H1 (cell line): ENCODE measurements at regions of chr17 and their contacts with region 1.

Region 1: DNA sequence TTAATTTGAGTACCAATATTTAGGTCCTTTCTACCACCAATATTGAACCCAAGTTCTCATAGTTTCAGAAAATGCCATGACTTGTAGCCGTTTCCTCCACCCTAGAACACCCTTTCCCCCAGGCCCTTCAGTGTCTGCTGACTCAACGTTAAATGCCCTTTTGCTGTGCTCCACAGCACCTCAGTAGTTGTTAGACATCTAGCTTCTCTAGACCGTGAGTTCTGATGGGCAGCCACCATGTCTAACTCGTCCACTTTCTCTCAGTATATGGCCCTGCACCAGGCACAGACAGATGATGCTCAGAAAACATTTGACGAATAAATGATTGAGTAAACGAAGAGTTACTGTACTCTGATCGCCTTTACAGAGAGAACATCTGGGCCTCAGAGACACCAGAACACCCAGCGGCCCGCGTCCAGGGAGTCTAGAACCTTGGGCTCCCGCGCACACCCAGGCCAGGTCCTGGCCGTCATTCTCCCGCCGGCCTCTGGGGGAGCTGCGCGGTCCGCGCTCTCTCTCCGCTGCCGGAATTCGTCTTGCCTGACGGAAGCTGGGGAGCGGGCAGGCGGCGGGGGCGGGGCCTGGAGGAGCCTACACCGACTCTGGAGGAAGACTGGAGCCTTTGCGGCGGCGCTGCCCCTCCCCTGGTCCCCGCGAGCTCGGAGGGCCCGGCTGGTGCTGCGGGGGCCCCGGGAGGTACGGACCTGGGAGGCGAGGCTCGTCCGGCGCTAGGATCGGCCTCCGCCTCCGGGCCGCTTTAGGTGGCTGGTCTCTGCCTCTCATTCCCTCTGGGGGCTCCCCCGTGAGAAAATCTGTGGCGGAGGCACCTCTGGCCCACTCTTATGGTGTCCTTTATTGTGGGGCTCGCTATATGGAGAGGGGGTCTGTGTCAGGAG is at the start of gene NKIRAS2:
- DNase-seq: peak; percentile 72 to 94
- H3K4me3 ChIP-seq: peak within 1 kb of the TSS; percentile 84 to 99 (median 89)
- H3K27ac ChIP-seq: no peak within 1 kb of the TSS
- H3K4me1 ChIP-seq: peaks cover 0 to 5% (median 1%) of the 10 kb centered on the region in 4 experiments; a peak in 3 of 7 replicates
- H3K27me3 ChIP-seq: no peaks in the 10 kb centered on the region
- CTCF ChIP-seq: peak; percentile 77 to 85 (median 81)
- EP300 ChIP-seq: no peak
- POLR2A ChIP-seq: peak in 1 of 2 experiments; percentile 77; a peak in 1 of 3 replicates
- RAD21 ChIP-seq: peak in 1 of 2 experiments; percentile 33; a peak in 2 of 4 replicates
- total RNA-seq, gene NKIRAS2: 31.1 and 34.5 TPM in 2 replicates

Region 2: GRCh38 chr17:41930009-41930832 is 89.5 kb before region 1 on chr17 and contains the start of gene ODAD4:
- CTCF ChIA-PET with region 1: interaction called, 3 read pairs
- POLR2A ChIA-PET with region 1: interaction called, 15 read pairs
- DNase-seq: peak; percentile 77 to 92
- H3K4me3 ChIP-seq: peak within 1 kb of the TSS; percentile 71 to 81 (median 75)
- H3K27ac ChIP-seq: peak within 1 kb of the TSS; percentile 28
- H3K4me1 ChIP-seq: peaks cover 0 to 4% (median 2%) of the 10 kb centered on the region in 4 experiments; a peak in 2 of 7 replicates
- H3K27me3 ChIP-seq: no peaks in the 10 kb centered on the region
- CTCF ChIP-seq: peak in 2 of 3 experiments; percentile 30 to 47; a peak in 3 of 4 replicates
- EP300 ChIP-seq: no peak
- POLR2A ChIP-seq: peak in 1 of 2 experiments; percentile 84; a peak in 2 of 3 replicates
- RAD21 ChIP-seq: peak; percentile 36 to 46
- total RNA-seq, gene ODAD4: 1.3 TPM in 2 replicates

Region 3: GRCh38 chr17:41972571-41973411 is 47.0 kb before region 1 on chr17:
- CTCF ChIA-PET with region 1: interaction called, 4 read pairs
- POLR2A ChIA-PET with region 1: interaction called, 67 read pairs
- DNase-seq: no peak
- H3K4me3 ChIP-seq: no peak overlapping the region
- H3K27ac ChIP-seq: no peak overlapping the region
- H3K4me1 ChIP-seq: peaks cover 0 to 1% (median 0%) of the 10 kb centered on the region in 4 experiments; a peak in 5 of 7 replicates
- H3K27me3 ChIP-seq: no peaks in the 10 kb centered on the region
- CTCF ChIP-seq: no peak
- EP300 ChIP-seq: no peak
- POLR2A ChIP-seq: no peak
- RAD21 ChIP-seq: no peak

Region 4: GRCh38 chr17:42112552-42113176 is 92.9 kb after region 1 on chr17 and contains the start of gene DHX58:
- CTCF ChIA-PET with region 1: interaction called, 1,084 read pairs
- POLR2A ChIA-PET with region 1: interaction called, 13 read pairs
- DNase-seq: no peak
- H3K4me3 ChIP-seq: no peak within 1 kb of the TSS
- H3K27ac ChIP-seq: no peak within 1 kb of the TSS
- H3K4me1 ChIP-seq: peaks cover 0 to 18% (median 10%) of the 10 kb centered on the region in 4 experiments; a peak in 6 of 7 replicates
- H3K27me3 ChIP-seq: no peaks in the 10 kb centered on the region
- CTCF ChIP-seq: no peak
- EP300 ChIP-seq: no peak
- POLR2A ChIP-seq: no peak
- RAD21 ChIP-seq: no peak
- total RNA-seq, gene DHX58: 4.4 and 5.6 TPM in 2 replicates